Activated B cell treated with CpG ODN at 0.5 μM for 24 hours (primary cell): ENCODE measurements at regions of chr6 and their contacts with region 1.

Region 1: GRCh38 chr6:27795697-27796494 is 116.3 kb downstream of the OR2B2 start:
- DNase-seq: no peak
- ATAC-seq: peak; percentile 60
- H3K4me3 Mint-ChIP-seq: no peak overlapping the region
- H3K27ac Mint-ChIP-seq: peak overlapping the region; percentile 50
- H3K4me1 Mint-ChIP-seq: peaks cover 21% of the 10 kb centered on the region
- H3K27me3 Mint-ChIP-seq: peaks cover 6% of the 10 kb centered on the region
- CTCF ChIP-seq: no peak

Region 2: GRCh38 chr6:27126815-27127537 is 668.9 kb before region 1 on chr6:
- CTCF ChIA-PET with region 1: interaction called, 12 read pairs
- POLR2A ChIA-PET with region 1: interaction called, 4 read pairs
- intact Hi-C with region 1: no loop called
- DNase-seq: peak; percentile 55
- ATAC-seq: peak; percentile 79
- H3K4me3 Mint-ChIP-seq: peak overlapping the region; percentile 81
- H3K27ac Mint-ChIP-seq: peak overlapping the region; percentile 82
- H3K4me1 Mint-ChIP-seq: peaks cover 14% of the 10 kb centered on the region
- H3K27me3 Mint-ChIP-seq: no peaks in the 10 kb centered on the region
- CTCF ChIP-seq: peak; percentile 54

Region 3: DNA sequence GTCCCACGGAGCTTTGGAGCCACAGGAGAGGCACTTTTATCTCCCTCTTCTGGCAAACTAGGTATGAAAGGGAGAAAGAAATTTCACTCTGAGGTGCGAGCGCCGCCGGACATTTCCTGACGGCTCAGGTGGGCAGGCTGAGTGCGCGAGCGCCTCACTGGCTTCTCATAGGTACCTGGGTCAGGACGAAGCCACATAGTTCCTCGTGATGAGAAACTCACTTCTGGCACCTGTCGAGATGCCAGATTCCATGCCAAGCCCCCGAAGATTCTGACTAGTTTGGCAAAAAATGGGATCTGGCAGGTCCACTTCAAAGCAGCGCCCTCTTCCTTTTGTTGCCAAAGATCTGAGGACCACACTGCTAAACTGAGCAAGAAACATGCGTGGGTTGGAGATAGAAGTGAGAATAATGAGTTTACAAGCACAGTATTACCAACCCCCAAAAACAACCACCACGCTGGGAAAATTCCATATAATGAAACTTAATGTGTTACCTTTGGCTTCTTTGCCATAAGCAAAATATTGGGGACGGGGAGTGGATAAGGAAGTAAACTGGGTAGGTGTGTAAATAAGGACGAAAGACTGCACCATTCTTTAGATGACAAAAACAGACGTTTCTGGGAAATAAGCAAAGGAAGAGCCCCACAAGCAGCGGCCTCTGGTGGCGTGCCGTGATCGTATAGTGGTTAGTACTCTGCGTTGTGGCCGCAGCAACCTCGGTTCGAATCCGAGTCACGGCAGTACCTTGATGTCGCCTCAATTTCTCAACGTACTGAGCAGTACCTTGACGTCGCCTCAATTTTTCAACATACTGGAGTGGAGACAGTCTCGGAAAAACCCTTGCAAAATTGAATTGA is 638.2 kb before region 1 on chr6:
- CTCF ChIA-PET with region 1: interaction called, 22 read pairs
- POLR2A ChIA-PET with region 1: no interaction called
- intact Hi-C with region 1: no loop called
- DNase-seq: peak; percentile 60
- ATAC-seq: peak; percentile 80
- H3K4me3 Mint-ChIP-seq: peak overlapping the region; percentile 89
- H3K27ac Mint-ChIP-seq: peak overlapping the region; percentile 81
- H3K4me1 Mint-ChIP-seq: peaks cover 33% of the 10 kb centered on the region
- H3K27me3 Mint-ChIP-seq: no peaks in the 10 kb centered on the region
- CTCF ChIP-seq: no peak

Region 4: DNA sequence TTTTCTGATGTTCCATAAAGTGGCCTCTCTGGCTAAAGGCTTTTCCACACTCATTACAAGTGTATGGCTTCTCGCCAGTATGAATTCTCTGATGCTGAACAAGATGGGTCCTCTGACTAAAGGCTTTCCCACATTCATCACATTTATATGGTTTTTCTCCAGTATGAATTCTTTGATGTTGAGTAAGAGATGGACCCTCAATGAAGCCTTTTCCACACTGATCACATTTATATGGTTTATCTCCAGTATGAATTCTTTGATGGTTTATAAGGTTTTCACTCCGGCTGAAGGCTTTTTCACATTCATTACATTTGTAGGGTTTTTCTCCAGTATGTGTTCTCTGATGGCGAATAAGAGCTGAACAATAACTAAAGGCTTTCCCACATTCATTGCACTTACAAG is 343.4 kb before region 1 on chr6:
- CTCF ChIA-PET with region 1: no interaction called
- POLR2A ChIA-PET with region 1: no interaction called
- intact Hi-C with region 1: no loop called
- DNase-seq: no peak
- ATAC-seq: no peak
- H3K4me3 Mint-ChIP-seq: no peak overlapping the region
- H3K27ac Mint-ChIP-seq: no peak overlapping the region
- H3K4me1 Mint-ChIP-seq: no peaks in the 10 kb centered on the region
- H3K27me3 Mint-ChIP-seq: no peaks in the 10 kb centered on the region
- CTCF ChIP-seq: no peak

Region 5: GRCh38 chr6:27518881-27519795 is 276.8 kb before region 1 on chr6:
- CTCF ChIA-PET with region 1: interaction called, 29 read pairs
- POLR2A ChIA-PET with region 1: no interaction called
- intact Hi-C with region 1: loop called (anchors 1 kb)
- DNase-seq: peak; percentile 48
- ATAC-seq: peak; percentile 72
- H3K4me3 Mint-ChIP-seq: peak overlapping the region; percentile 83
- H3K27ac Mint-ChIP-seq: peak overlapping the region; percentile 82
- H3K4me1 Mint-ChIP-seq: peaks cover 15% of the 10 kb centered on the region
- H3K27me3 Mint-ChIP-seq: peaks cover 30% of the 10 kb centered on the region
- CTCF ChIP-seq: no peak

Region 6: DNA sequence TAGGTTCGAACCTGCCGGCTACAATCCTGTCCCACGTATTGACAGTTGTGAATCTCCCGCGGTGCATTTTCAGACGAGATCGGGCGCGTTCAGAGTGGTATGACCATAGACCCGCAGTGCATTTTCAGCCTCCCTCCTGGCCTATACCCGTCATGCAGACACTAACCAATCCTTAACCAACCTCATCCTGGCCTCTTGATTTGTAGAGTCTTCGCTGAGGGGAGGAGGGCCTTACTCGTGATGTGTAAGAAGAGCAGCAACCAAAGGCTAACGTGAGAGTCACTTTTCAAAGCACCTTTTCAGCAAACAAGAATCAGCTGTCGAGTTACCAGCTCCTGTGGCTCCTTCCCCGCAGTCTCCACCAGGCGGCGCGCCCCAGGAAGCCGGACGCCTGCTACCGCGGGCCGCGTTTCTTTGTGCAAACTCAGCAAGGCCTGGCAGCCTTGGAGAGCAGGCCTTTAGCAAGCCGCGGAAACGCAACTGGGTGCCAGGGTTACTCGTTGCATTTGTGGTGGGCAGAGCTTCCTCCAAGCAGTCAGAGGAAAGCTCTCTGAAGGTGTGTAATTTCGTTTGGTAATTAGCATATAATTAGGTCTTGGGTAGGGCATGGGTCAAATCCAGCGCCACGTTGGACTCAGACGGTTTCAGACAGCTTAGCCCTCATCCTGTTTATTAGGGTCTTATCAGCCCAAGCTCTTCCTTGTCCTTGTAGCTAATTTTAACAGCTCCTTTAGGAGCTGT is 23.5 kb before region 1 on chr6:
- CTCF ChIA-PET with region 1: interaction called, 49 read pairs
- POLR2A ChIA-PET with region 1: interaction called, 3 read pairs
- intact Hi-C with region 1: loop called (anchors 1 kb)
- DNase-seq: peak; percentile 74
- ATAC-seq: peak; percentile 92
- H3K4me3 Mint-ChIP-seq: peak overlapping the region; percentile 57
- H3K27ac Mint-ChIP-seq: peak overlapping the region; percentile 66
- H3K4me1 Mint-ChIP-seq: peaks cover 38% of the 10 kb centered on the region
- H3K27me3 Mint-ChIP-seq: peaks cover 5% of the 10 kb centered on the region
- CTCF ChIP-seq: peak; percentile 66

Region 7: GRCh38 chr6:27871924-27872638 is 76.2 kb after region 1 on chr6:
- CTCF ChIA-PET with region 1: interaction called, 10 read pairs
- POLR2A ChIA-PET with region 1: interaction called, 3 read pairs
- intact Hi-C with region 1: no loop called
- DNase-seq: peak; percentile 73
- ATAC-seq: peak; percentile 80
- H3K4me3 Mint-ChIP-seq: peak overlapping the region; percentile 94
- H3K27ac Mint-ChIP-seq: peak overlapping the region; percentile 95
- H3K4me1 Mint-ChIP-seq: peaks cover 36% of the 10 kb centered on the region
- H3K27me3 Mint-ChIP-seq: no peaks in the 10 kb centered on the region
- CTCF ChIP-seq: no peak